ENCODE measurements at regions of chr14 and their contacts with region 1.

Region 1: DNA sequence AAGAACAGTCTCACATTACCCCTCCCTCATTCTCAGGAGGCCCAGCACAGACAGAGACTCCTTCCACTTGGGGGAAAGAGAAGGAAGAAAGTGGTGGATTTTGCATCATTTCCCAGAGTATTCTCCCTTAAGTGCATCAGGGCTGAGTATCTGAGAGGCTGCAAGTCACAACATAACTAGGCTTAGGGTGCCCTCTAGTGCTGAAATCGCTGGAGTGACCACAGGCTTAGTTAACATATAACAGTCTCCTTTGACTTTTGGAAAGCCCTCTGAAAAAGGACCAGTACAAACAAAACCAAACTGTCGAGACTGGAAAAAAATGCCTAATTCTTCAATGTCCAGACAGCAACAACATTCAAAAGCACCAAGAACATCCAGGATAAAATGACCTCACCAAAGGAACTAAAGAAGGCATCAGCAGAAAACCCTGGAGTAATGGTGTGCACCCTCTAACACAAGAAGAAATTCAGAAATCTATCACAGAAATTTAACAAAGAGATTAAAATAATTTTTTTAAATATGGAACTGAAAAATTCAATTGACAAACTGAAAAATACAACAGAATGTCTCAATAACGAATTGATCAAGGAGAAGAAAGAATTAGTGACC is 412.3 kb downstream of the RPS29 start:
- DNase-seq: peak; percentile 76
- H3K4me3 ChIP-seq: no peak overlapping the region
- H3K27ac ChIP-seq: no peak overlapping the region
- H3K4me1 ChIP-seq: no peaks in the 10 kb centered on the region
- H3K27me3 ChIP-seq: no peaks in the 10 kb centered on the region

Region 2: GRCh38 chr14:47917345-47917954 is 1256.4 kb before region 1 on chr14:
- in situ Hi-C with region 1: loop called (anchors 25 kb)
- DNase-seq: peak; percentile 32
- H3K4me3 ChIP-seq: no peak overlapping the region
- H3K27ac ChIP-seq: no peak overlapping the region
- H3K4me1 ChIP-seq: no peaks in the 10 kb centered on the region
- H3K27me3 ChIP-seq: no peaks in the 10 kb centered on the region

Region 3: GRCh38 chr14:48748151-48748675 is 425.7 kb before region 1 on chr14:
- in situ Hi-C with region 1: no loop called
- DNase-seq: no peak
- H3K4me3 ChIP-seq: no peak overlapping the region
- H3K27ac ChIP-seq: no peak overlapping the region
- H3K4me1 ChIP-seq: no peaks in the 10 kb centered on the region
- H3K27me3 ChIP-seq: no peaks in the 10 kb centered on the region

Measured in GM23248 (cell line).